Activated CD8-positive, alpha-beta T cell treated with anti-CD3 and anti-CD28 coated beads for 36 hours (primary cell): ENCODE measurements at regions of chr19 and their contacts with region 1.

Region 1: GRCh38 chr19:2269244-2269947 is 12.6 kb downstream of the PEAK3 start:
- DNase-seq: peak; percentile 98
- ATAC-seq: peak; percentile 80
- H3K4me3 Mint-ChIP-seq: peak overlapping the region; percentile 85
- H3K27ac Mint-ChIP-seq: peak overlapping the region; percentile 90
- H3K4me1 Mint-ChIP-seq: peaks cover 35% of the 10 kb centered on the region
- H3K27me3 Mint-ChIP-seq: no peaks in the 10 kb centered on the region
- CTCF ChIP-seq: no peak

Region 2: GRCh38 chr19:2207991-2208860 is 61.2 kb before region 1 on chr19:
- CTCF ChIA-PET with region 1: no interaction called
- POLR2A ChIA-PET with region 1: no interaction called
- intact Hi-C with region 1: no loop called
- DNase-seq: peak; percentile 68
- ATAC-seq: peak; percentile 62
- H3K4me3 Mint-ChIP-seq: no peak overlapping the region
- H3K27ac Mint-ChIP-seq: no peak overlapping the region
- H3K4me1 Mint-ChIP-seq: no peaks in the 10 kb centered on the region
- H3K27me3 Mint-ChIP-seq: no peaks in the 10 kb centered on the region
- CTCF ChIP-seq: no peak

Region 3: DNA sequence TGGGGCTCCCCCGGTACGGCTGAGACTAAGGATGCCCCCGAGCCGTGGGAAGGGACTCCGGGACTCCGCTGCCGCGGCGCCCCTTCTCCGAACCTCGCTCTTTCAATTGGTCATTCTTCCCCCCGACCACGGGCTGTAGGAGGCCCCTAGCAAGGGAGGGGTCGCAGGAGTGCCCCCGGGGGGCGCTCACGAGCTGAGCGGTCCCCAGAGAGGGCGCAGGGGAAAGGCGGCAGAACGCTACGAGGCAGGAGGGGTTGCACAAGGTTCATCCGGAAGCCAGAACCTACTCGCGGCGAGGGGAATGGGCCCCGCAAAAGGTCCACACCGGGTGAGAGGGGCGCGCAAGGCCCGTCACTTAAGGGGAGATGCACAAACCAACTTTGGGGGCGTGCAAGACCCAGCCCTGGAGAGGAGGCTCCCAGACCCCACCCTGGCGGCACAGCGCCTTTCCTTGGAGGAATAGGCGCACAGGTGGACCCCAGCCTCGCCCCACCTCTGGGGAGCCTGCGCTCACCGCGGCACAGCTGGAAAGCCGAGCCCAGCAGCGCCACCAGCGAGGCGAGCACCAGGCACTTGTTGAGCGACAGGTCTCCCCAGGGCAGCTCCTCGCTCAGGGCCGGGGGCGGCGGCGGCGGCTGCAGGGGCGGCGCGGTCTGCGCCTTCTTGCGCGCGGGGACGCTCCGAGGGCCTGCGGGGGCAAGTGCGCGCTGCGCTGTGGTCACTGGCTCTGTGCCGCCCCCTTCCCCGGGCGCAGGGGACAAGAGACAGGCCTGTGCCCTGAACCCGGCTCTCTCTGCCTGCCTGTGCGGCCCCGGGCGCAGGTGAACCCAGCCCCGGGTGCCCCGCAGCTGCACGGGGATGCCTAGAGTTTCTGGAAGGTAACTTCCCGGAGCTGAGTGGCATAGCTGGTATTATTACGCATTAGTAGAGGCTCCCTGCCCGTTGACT is 16.0 kb before region 1 on chr19:
- CTCF ChIA-PET with region 1: interaction called, 12 read pairs
- POLR2A ChIA-PET with region 1: interaction called, 102 read pairs
- intact Hi-C with region 1: no loop called
- DNase-seq: peak; percentile 65
- ATAC-seq: peak; percentile 37
- H3K4me3 Mint-ChIP-seq: peak overlapping the region; percentile 58
- H3K27ac Mint-ChIP-seq: no peak overlapping the region
- H3K4me1 Mint-ChIP-seq: peaks cover 17% of the 10 kb centered on the region
- H3K27me3 Mint-ChIP-seq: peaks cover 2% of the 10 kb centered on the region
- CTCF ChIP-seq: peak; percentile 65

Region 4: DNA sequence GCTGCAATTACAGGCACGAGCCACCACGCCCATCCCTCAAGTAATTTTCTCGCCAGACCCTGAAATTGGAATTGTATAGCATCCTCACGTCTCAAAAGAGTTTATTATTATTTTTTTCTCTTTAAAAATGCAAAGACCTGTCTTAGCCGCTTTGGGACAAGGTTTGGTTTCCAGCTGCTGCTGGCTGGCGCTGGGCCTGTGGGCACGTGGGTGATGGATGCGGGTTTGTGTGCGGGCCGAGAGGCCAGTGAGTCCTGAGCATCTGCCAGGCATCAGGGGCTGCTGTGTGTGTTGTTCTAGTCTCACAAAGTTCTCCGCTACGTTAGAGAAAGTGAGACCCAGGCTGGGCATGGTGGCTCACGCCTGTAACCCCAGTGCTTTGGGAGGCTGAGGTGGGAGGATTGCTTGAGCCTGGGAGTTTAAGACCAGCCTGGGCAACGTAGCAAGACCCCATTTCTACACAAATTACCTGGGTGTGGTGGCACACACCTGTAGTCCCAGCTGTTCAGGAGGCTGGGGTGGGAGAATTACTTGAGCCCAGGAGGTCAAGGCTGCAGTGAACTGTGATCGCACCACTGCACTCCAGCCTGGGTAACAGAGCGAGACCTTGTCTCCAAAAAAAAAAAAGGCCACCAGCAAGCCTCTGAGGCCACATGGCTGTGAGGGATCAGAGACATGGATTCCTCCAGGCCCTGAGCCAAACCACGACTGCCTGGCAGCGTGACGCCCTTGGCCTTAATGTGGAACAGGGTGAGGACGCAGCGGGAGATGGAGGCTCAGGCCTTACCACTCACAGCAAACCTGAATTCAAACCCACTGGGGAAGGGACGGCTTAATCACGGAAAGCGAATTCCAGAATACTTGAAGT is 86.0 kb after region 1 on chr19:
- CTCF ChIA-PET with region 1: no interaction called
- POLR2A ChIA-PET with region 1: no interaction called
- intact Hi-C with region 1: no loop called
- DNase-seq: no peak
- ATAC-seq: no peak
- H3K4me3 Mint-ChIP-seq: no peak overlapping the region
- H3K27ac Mint-ChIP-seq: no peak overlapping the region
- H3K4me1 Mint-ChIP-seq: peaks cover 1% of the 10 kb centered on the region
- H3K27me3 Mint-ChIP-seq: peaks cover 2% of the 10 kb centered on the region
- CTCF ChIP-seq: no peak